Thyroid gland (tissue), 4 donors: ENCODE measurements at regions of chr17 and their contacts with region 1.

Region 1: DNA sequence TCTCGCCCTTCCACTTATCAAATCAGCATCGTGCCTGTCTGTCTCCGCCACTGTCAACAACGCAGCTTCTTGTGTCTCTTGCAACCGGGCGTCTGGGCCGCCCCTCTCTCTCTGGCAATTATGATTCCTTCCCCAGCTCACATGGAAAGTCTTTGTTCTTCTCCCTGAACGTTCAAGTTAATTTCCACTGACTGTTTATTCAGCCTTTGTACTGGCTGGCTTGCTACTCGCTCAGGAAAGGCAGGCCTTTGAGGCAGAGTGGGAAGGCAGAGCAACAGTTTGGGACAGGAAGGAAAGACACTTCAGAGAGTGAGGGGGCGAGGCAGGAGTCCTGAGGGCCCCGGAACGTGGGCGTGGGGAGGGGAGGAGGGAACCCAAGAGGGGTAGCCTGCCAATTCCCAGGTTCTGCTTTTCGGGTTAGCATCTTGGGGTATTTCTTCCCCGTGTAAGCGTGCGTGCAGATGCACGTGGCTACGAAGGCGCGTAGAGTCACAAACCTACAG is 50.8 kb downstream of the AKAP1 start:
- DNase-seq: no peak
- H3K4me3 ChIP-seq: no peak overlapping the region
- H3K27ac ChIP-seq: no peak overlapping the region
- H3K4me1 ChIP-seq: no peaks in the 10 kb centered on the region
- H3K27me3 ChIP-seq: no peaks in the 10 kb centered on the region
- CTCF ChIP-seq: no peak
- POLR2A ChIP-seq: no peak

Region 2: GRCh38 chr17:57062865-57063264 is 73.0 kb before region 1 on chr17:
- intact Hi-C with region 1: no loop called
- DNase-seq: no peak
- H3K4me3 ChIP-seq: no peak overlapping the region
- H3K27ac ChIP-seq: no peak overlapping the region
- H3K4me1 ChIP-seq: peaks cover 0 to 11% of the 10 kb centered on the region in 2 donors
- H3K27me3 ChIP-seq: no peaks in the 10 kb centered on the region
- CTCF ChIP-seq: no peak
- POLR2A ChIP-seq: no peak

Region 3: DNA sequence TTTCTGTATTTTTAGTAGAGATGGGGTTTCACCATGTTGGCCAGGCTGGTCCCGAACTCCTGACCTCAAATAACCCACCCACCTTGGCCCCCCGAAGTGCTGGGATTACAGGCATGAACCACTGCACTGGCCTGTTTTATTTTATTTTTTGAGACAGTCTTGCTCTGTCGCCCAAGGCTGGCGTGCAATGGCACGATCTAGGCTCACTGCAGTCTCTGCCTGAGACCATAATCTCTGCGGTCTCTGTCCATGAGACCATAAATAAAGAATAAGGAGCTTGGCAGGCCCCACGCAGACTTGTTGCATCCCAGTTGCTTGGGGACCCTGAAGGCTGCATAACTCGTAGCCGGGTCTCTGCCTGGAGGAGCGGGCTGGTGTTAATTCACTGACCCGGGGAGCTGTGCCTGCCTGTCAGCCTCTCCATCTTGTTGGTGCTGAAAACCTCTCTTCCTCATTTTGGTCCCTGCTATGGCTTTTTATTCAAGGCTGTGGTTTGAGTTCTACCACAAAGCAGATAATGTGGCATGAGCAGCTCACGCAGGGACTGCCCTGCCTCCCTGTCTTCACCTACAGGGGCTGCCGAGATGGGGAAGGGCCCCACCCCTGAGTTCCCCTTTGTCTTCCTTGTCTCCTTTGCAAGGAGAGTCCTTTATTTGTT is 202.5 kb after region 1 on chr17:
- intact Hi-C with region 1: no loop called
- DNase-seq: no peak
- H3K4me3 ChIP-seq: no peak overlapping the region
- H3K27ac ChIP-seq: no peak overlapping the region
- H3K4me1 ChIP-seq: peaks cover 16 to 42% of the 10 kb centered on the region in 2 donors
- H3K27me3 ChIP-seq: no peaks in the 10 kb centered on the region
- CTCF ChIP-seq: no peak
- POLR2A ChIP-seq: no peak

Region 4: GRCh38 chr17:57747221-57748017 is 611.6 kb after region 1 on chr17:
- intact Hi-C with region 1: loop called (anchors 5 kb)
- DNase-seq: peak; percentile 52 to 56
- H3K4me3 ChIP-seq: no peak overlapping the region
- H3K27ac ChIP-seq: no peak overlapping the region
- H3K4me1 ChIP-seq: no peaks in the 10 kb centered on the region
- H3K27me3 ChIP-seq: no peaks in the 10 kb centered on the region
- CTCF ChIP-seq: peak; percentile 43 to 80 (median 74)
- POLR2A ChIP-seq: no peak